ENCODE measurements at regions of chr4 and their contacts with region 1.

Region 1: GRCh38 chr4:2418650-2419571 is at the start of gene CFAP99:
- DNase-seq: peak; percentile 97 to 99
- ATAC-seq: peak; percentile 95 to 98 (median 97)
- H3K4me3 ChIP-seq: peak within 1 kb of the TSS; percentile 41 to 93 (median 63)
- H3K27ac ChIP-seq: peak within 1 kb of the TSS in 6 of 10 donors; percentile 31 to 71 (median 52)
- H3K4me1 ChIP-seq: peaks cover 3 to 39% (median 21%) of the 10 kb centered on the region in 9 donors
- H3K27me3 ChIP-seq: peaks cover 0 to 71% (median 40%) of the 10 kb centered on the region in 7 donors
- CTCF ChIP-seq: peak in 3 of 9 donors; percentile 33 to 43 (median 36)
- total RNA-seq, gene CFAP99: not detected

Region 2: GRCh38 chr4:2255501-2256155 is 163.3 kb before region 1 on chr4:
- intact Hi-C with region 1: loop called in 7 of 10 experiments (anchors 5 to 10 kb)
- DNase-seq: peak; percentile 24 to 56
- ATAC-seq: peak in 7 of 8 donors; percentile 4 to 43 (median 29)
- H3K4me3 ChIP-seq: peak overlapping the region in 6 of 10 donors; percentile 3 to 30 (median 15)
- H3K27ac ChIP-seq: peak overlapping the region; percentile 72 to 94 (median 91)
- H3K4me1 ChIP-seq: peaks cover 56 to 78% (median 71%) of the 10 kb centered on the region in 9 donors
- H3K27me3 ChIP-seq: no peaks in the 10 kb centered on the region
- CTCF ChIP-seq: no peak

Region 3: DNA sequence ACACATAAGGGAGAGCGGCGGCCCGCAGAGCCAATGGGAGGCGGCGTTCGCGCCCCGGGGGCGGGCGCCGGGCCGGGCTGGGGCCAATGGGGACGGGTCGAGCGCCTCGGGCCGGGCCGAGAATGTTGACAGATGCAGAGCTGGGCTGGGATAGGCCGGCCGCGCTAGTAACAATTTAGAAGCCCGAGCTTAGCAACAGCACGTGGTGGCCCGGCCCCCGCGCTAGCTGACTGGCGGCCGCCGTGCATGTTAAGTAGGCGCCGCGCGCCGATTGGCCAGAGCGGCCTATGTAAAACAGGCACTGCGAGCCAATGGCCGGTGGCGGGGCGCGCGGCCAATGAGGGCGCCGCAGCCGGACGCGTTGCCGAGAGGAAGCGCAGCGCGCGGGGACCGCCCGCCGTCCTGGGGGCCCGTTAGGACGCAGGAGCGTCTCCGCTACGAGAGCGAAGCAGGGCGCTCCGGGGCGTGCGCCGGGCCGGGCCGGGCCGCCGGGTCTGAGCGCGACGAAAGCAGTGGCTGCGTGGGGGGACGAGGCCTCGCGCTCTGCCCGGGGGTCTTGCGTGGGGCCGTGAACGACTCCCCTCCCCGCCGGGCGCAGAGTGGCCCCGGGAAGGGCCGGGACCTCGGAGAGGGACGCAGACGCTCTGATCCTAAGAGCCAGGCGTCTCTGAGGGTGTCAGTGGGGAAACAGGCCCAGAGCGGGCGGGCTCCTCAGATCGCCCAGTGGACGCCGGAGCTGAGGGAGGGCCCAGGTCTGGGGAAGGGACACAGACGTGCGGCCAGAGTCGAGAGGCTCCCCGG is 156.6 kb before region 1 on chr4:
- intact Hi-C with region 1: loop called in 7 of 10 experiments (anchors 5 to 10 kb)
- DNase-seq: peak; percentile 99
- ATAC-seq: peak; percentile 91 to 96 (median 94)
- H3K4me3 ChIP-seq: peak overlapping the region; percentile 9 to 99 (median 84)
- H3K27ac ChIP-seq: peak overlapping the region; percentile 95 to 100 (median 98)
- H3K4me1 ChIP-seq: peaks cover 42 to 82% (median 63%) of the 10 kb centered on the region in 9 donors
- H3K27me3 ChIP-seq: no peaks in the 10 kb centered on the region
- CTCF ChIP-seq: no peak

Region 4: GRCh38 chr4:2462218-2462991 is 43.5 kb after region 1 on chr4:
- intact Hi-C with region 1: loop called in 1 of 10 experiments (anchors 5 kb)
- DNase-seq: peak; percentile 54 to 75
- ATAC-seq: peak; percentile 89 to 97 (median 94)
- H3K4me3 ChIP-seq: peak overlapping the region; percentile 5 to 65 (median 56)
- H3K27ac ChIP-seq: peak overlapping the region in 8 of 10 donors; percentile 1 to 68 (median 34)
- H3K4me1 ChIP-seq: peaks cover 3 to 17% (median 9%) of the 10 kb centered on the region in 9 donors
- H3K27me3 ChIP-seq: peaks cover 0 to 15% (median 8%) of the 10 kb centered on the region in 7 donors
- CTCF ChIP-seq: peak; percentile 34 to 80 (median 65)

Region 5: GRCh38 chr4:2963175-2963965 is 544.5 kb after region 1 on chr4 and contains the starts of genes GRK4 and NOP14:
- intact Hi-C with region 1: loop called in 1 of 10 experiments (anchors 10 kb)
- DNase-seq: peak; percentile 97 to 98
- ATAC-seq: peak; percentile 97 to 99 (median 98)
- H3K4me3 ChIP-seq: peak within 1 kb of the TSS; percentile 77 to 99 (median 97)
- H3K27ac ChIP-seq: peak within 1 kb of the TSS; percentile 86 to 95 (median 92)
- H3K4me1 ChIP-seq: peaks cover 9 to 36% (median 25%) of the 10 kb centered on the region in 9 donors
- H3K27me3 ChIP-seq: no peaks in the 10 kb centered on the region
- CTCF ChIP-seq: peak in 8 of 9 donors; percentile 21 to 64 (median 41)
- total RNA-seq, gene GRK4: 6.2 to 13.4 (median 10.3) TPM
- total RNA-seq, gene NOP14: 12.4 to 24.0 (median 17.3) TPM

Measured in heart right ventricle (tissue), 16 donors.